Dorsolateral prefrontal cortex (tissue), 120 donors: ENCODE measurements at regions of chrX and their contacts with region 1.

Region 1: DNA sequence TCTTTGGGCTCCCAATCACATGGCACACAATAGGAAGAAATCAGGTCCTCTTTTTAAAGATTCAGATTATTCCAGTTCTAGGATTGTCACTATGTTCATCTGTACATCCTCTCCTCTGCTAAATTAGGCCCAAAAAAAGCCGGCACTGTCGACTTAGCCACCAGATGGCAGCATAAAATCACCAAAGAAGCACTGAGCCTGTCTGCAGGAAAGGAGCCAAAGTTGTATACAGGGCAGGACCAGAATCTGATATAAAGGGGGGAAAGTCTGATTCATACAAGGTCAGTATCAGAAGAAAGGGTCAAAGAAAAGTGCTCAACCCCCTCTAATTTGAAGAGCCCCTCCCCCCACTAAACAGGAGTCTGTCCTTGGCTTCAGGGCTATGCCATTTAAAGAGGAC is 292.5 kb downstream of the CHIC1 start:
- DNase-seq: peak; percentile 58 to 89 (median 74)
- H3K4me3 ChIP-seq: no peak overlapping the region
- H3K27ac ChIP-seq: peak overlapping the region in 1 of 59 donors; percentile 11
- H3K27me3 ChIP-seq: peaks cover 0 to 8% (median 0%) of the 10 kb centered on the region in 45 donors
- CTCF ChIP-seq: peak; percentile 38 to 94 (median 85)

Region 2: GRCh38 chrX:74015379-74016019 is 160.0 kb after region 1 on chrX:
- intact Hi-C with region 1: loop called in 1 of 2 experiments (anchors 5 kb)
- DNase-seq: peak in 8 of 10 donors; percentile 24 to 74 (median 56)
- H3K4me3 ChIP-seq: no peak overlapping the region
- H3K27ac ChIP-seq: no peak overlapping the region
- H3K27me3 ChIP-seq: no peaks in the 10 kb centered on the region
- CTCF ChIP-seq: peak in 55 of 56 donors; percentile 50 to 95 (median 82)

Region 3: DNA sequence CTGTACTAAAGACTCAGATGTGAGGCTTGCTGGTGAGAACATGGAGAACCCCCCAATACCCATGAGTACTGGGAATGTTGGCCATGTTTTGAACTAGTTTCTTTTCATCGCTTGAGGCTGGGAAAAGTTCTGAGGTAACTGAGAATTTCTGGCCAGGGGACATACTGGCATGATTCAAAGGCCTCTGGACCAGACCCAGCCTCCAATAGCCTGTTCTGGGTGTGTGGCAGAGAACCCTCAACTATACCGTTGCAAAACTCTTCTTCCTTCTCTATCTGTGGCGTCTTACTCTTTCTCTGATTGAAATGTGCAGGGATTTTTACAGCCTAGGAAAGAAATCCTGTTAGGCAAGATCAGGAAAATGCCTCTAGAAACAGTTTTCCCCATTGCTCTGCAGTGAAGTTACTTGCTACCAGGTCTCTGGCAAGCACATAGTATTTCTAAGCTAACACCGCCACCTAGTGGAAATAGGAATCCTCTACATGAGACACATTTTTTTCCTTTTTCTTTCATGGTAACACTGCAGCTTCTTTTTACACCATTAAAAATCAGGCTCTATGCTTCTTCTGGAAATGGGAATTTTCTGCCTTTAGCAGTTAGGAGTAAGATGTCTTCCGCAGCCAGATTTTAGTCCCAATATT is 277.7 kb after region 1 on chrX:
- intact Hi-C with region 1: loop called (anchors 2 kb)
- DNase-seq: peak in 1 of 10 donors; percentile 29
- H3K4me3 ChIP-seq: no peak overlapping the region
- H3K27ac ChIP-seq: peak overlapping the region in 4 of 59 donors; percentile 8 to 38 (median 18)
- H3K27me3 ChIP-seq: peaks cover 0 to 40% (median 3%) of the 10 kb centered on the region in 45 donors
- CTCF ChIP-seq: peak; percentile 46 to 96 (median 84)

Region 4: DNA sequence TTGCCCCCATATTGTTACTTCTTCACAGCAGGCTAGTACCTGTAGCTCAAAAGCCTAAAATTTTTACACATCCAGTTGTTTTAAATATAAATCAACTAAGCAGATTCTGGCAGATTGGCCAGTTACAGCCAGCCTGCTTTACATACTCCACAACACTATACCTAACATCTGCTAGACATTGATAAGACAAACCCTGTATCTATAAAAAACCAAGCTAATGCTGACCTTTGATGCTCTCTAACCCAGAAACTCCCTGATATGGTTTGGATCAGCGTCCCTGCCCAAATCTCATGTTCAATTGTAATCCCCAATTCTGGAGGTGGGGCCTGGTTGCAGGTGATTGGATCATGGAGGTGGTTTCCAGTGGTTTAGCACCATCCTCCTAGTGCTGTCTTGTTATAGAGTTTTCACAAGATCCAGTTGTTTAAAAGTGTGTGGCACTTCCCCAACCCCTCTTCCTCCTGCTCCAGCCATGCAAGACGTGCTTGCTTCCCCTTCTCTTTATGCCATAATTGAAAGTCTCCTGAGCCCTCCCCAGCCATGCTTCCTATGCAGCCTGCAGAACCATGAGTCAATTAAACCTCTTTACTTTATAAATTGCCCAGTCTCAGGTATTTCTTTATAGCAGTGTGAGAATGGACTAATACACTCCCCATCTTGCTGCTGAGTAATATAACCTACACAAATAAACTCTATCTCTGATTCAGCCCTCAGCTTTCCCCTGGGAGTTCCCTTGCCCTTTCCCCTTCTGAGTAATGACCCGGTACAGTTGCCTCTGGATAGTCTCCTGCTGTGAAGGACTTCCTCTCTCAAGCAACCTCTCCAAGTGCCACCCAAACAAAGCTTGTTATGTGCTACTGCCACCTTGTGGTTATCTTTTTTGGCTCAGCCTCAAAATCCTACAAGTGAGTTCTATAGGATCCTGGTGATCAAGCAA is 488.1 kb after region 1 on chrX:
- intact Hi-C with region 1: loop called (anchors 10 kb)
- DNase-seq: peak in 2 of 10 donors; percentile 19 to 28
- H3K4me3 ChIP-seq: no peak overlapping the region
- H3K27ac ChIP-seq: no peak overlapping the region
- H3K27me3 ChIP-seq: peaks cover 0 to 43% (median 11%) of the 10 kb centered on the region in 45 donors
- CTCF ChIP-seq: peak in 55 of 56 donors; percentile 41 to 77 (median 57)

Region 5: GRCh38 chrX:74382613-74383012 is 527.1 kb after region 1 on chrX:
- intact Hi-C with region 1: loop called in 1 of 2 experiments (anchors 5 kb)
- DNase-seq: peak; percentile 24 to 74 (median 50)
- H3K4me3 ChIP-seq: no peak overlapping the region
- H3K27ac ChIP-seq: no peak overlapping the region
- H3K27me3 ChIP-seq: peaks cover 0 to 75% (median 36%) of the 10 kb centered on the region in 45 donors
- CTCF ChIP-seq: peak; percentile 33 to 80 (median 68)